ENCODE measurements at regions of chr12 and their contacts with region 1.

Region 1: DNA sequence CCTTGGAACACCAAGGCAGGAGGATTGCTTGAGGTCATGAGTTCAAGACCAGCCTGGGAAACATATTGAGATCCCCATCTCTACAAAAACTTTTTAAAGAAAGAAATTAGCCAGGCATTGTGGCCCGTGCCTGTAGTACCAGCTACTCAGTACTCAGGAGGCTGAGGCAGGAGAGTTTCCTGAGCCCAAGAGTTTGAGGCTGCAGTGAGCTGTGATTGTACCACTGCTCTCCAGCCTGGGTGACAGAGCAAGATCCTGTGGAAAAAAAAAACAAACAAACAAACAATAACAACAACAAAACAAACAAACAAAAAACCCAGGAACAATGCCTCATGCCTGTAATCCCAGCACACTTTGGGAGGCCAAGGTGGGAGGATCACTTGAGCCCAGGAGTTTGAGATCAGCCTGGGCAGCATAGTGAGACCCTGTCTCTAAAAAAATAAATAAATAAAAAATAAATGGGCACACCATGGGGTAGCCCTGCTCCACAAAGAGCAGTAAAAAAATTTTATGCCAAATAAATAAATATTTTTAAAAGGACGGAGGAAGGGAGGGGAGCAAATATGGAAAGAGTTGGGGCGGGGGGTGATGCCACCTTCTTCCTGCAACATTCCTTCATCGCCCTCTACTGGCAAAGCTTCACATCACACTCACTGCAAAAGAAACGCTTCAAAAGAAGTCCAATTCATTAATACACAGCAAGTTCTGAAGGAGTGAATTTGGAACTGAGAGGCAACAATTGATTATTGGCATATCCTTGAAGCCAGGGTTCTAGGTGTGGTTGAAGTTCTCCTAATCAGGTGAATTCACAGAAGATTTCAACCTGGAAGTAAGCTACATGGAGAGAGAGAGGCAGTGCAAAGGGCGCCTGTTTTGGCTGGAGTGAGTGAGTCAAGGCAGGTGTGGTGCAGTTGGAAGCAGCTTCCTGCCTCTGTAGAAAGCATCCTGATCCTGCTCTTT is 8.8 kb upstream of the GNPTAB start:
- DNase-seq: peak; percentile 81
- ATAC-seq: peak; percentile 76
- H3K4me3 Mint-ChIP-seq: no peak overlapping the region
- H3K27ac Mint-ChIP-seq: no peak overlapping the region
- H3K4me1 Mint-ChIP-seq: peaks cover 7% of the 10 kb centered on the region
- H3K27me3 Mint-ChIP-seq: no peaks in the 10 kb centered on the region

Region 2: GRCh38 chr12:101414533-101415119 is 425.0 kb before region 1 on chr12:
- CTCF ChIA-PET with region 1: interaction called, 9 read pairs
- POLR2A ChIA-PET with region 1: no interaction called
- intact Hi-C with region 1: loop called (anchors 1 to 10 kb)
- DNase-seq: peak; percentile 16
- ATAC-seq: no peak
- H3K4me3 Mint-ChIP-seq: no peak overlapping the region
- H3K27ac Mint-ChIP-seq: no peak overlapping the region
- H3K4me1 Mint-ChIP-seq: no peaks in the 10 kb centered on the region
- H3K27me3 Mint-ChIP-seq: no peaks in the 10 kb centered on the region

Region 3: GRCh38 chr12:101616027-101616494 is 223.5 kb before region 1 on chr12:
- CTCF ChIA-PET with region 1: no interaction called
- POLR2A ChIA-PET with region 1: no interaction called
- intact Hi-C with region 1: no loop called
- DNase-seq: no peak
- ATAC-seq: peak; percentile 47
- H3K4me3 Mint-ChIP-seq: no peak overlapping the region
- H3K27ac Mint-ChIP-seq: peak overlapping the region; percentile 45
- H3K4me1 Mint-ChIP-seq: peaks cover 14% of the 10 kb centered on the region
- H3K27me3 Mint-ChIP-seq: no peaks in the 10 kb centered on the region

Region 4: GRCh38 chr12:101759396-101760047 is 80.1 kb before region 1 on chr12:
- CTCF ChIA-PET with region 1: interaction called, 33 read pairs
- POLR2A ChIA-PET with region 1: no interaction called
- intact Hi-C with region 1: no loop called
- DNase-seq: no peak
- ATAC-seq: no peak
- H3K4me3 Mint-ChIP-seq: no peak overlapping the region
- H3K27ac Mint-ChIP-seq: no peak overlapping the region
- H3K4me1 Mint-ChIP-seq: no peaks in the 10 kb centered on the region
- H3K27me3 Mint-ChIP-seq: no peaks in the 10 kb centered on the region

Region 5: GRCh38 chr12:101782273-101782731 is 57.3 kb before region 1 on chr12:
- CTCF ChIA-PET with region 1: interaction called, 17 read pairs
- POLR2A ChIA-PET with region 1: no interaction called
- intact Hi-C with region 1: no loop called
- DNase-seq: peak; percentile 28
- ATAC-seq: peak; percentile 71
- H3K4me3 Mint-ChIP-seq: no peak overlapping the region
- H3K27ac Mint-ChIP-seq: peak overlapping the region; percentile 86
- H3K4me1 Mint-ChIP-seq: peaks cover 24% of the 10 kb centered on the region
- H3K27me3 Mint-ChIP-seq: no peaks in the 10 kb centered on the region

Region 6: DNA sequence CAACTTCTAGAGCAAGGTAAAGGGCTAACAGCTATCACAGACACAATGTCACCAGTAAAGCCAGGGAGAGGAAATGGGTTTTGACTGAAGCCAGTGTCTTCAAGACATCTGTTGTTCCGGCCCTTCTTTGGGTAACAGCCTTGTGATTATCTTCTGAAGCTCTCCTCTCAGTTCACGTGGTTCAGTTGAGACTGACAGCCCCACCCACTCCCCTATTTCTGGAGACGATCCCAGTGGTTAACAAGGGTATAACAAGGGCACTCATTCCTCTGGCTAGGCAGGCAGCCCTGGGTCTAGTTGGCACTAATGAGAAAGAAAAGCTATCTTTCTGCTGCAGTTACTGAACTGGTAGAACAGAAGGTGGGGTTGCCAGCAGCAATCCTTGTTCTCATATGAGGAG is 15.7 kb before region 1 on chr12:
- CTCF ChIA-PET with region 1: interaction called, 75 read pairs
- POLR2A ChIA-PET with region 1: no interaction called
- intact Hi-C with region 1: no loop called
- DNase-seq: peak; percentile 76
- ATAC-seq: peak; percentile 93
- H3K4me3 Mint-ChIP-seq: peak overlapping the region; percentile 16
- H3K27ac Mint-ChIP-seq: peak overlapping the region; percentile 61
- H3K4me1 Mint-ChIP-seq: peaks cover 79% of the 10 kb centered on the region
- H3K27me3 Mint-ChIP-seq: no peaks in the 10 kb centered on the region